HAP-1 (cell line): ENCODE measurements at regions of chr2 and their contacts with region 1.

Region 1: DNA sequence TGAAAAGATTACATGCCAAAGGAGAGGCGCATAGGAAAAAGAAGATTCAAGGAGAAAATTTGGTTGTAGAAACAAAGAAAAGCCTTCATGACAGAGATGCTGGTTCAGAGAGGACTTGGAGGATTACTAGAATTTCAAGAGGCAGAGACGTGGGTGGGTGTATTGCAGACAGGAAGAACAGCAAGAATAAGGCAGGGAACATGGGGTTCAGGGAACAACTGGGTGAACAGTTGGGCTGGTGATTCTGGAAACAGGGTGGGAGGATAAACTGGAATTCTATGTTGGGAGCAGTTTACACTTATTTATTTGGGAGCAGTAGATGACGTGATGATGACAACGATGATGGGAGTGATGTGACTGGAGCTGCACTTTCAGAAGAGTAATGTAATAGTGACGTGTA is 18.4 kb upstream of the GMCL1 start:
- DNase-seq: no peak
- H3K4me3 ChIP-seq: no peak overlapping the region
- H3K4me1 ChIP-seq: no peaks in the 10 kb centered on the region
- H3K27me3 ChIP-seq: no peaks in the 10 kb centered on the region

Region 2: GRCh38 chr2:69724540-69725159 is 86.4 kb before region 1 on chr2:
- in situ Hi-C with region 1: loop called (anchors 5 kb)
- DNase-seq: peak; percentile 81 to 93
- H3K4me3 ChIP-seq: no peak overlapping the region
- H3K4me1 ChIP-seq: peaks cover under 1% of the 10 kb centered on the region; the same call in 1 of the 2 replicates
- H3K27me3 ChIP-seq: no peaks in the 10 kb centered on the region

Region 3: DNA sequence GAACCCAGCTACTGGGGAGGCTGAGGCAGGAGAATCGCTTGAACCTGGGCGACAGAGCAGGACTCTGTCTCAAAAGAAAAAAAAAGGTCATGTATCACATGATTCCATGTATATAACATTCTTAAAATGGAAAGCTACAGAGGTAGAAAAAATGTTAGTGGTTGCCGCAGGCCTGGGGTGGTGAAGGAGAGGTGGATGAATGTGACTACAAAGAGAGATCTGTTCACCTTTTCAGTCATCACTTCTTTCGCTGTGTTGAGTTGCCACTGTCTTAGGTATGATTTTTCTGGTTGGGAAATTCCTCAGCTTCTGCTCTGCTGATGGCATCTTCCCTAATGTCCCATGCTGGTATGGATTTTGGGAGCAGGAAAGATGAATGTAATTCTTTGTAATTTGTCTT is 77.4 kb after region 1 on chr2:
- in situ Hi-C with region 1: no loop called
- DNase-seq: no peak
- H3K4me3 ChIP-seq: no peak overlapping the region
- H3K4me1 ChIP-seq: 0 out of 2 replicates have a peak, but pooled peaks cover 1% of the 10 kb centered on the region
- H3K27me3 ChIP-seq: no peaks in the 10 kb centered on the region